B cell (primary cell): ENCODE measurements at regions of chr19 and their contacts with region 1.

Region 1: DNA sequence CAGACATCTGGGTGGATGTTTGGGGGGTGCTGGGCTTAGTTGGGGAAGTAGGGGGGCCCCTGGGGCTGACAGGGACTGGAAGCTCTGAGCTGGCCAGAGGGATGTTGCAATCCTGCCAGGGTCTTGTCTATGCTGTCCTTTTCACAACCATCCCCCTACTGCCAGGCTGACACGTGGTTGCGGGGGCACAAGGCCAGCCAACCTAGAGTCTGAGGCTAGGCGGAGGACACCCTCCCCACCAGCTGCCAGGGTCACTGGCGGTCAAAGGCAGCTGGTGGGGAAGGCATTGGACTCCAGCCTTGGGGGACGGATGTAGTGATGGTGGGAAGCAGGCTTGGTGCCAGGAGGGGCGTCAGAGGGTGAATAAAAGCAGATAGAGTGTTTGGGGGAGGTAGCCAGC is 1.6 kb upstream of the APOC1 start:
- DNase-seq: no peak
- ATAC-seq: no peak
- H3K4me3 ChIP-seq: no peak overlapping the region
- H3K4me3 Mint-ChIP-seq: no peak overlapping the region
- H3K27ac ChIP-seq: no peak overlapping the region
- H3K27ac Mint-ChIP-seq: no peak overlapping the region
- H3K4me1 ChIP-seq: peaks cover 7 to 13% of the 10 kb centered on the region in 2 donors
- H3K4me1 Mint-ChIP-seq: peaks cover 9% of the 10 kb centered on the region
- H3K27me3 ChIP-seq: peaks cover 0 to 21% (median 2%) of the 10 kb centered on the region in 4 experiments
- H3K27me3 Mint-ChIP-seq: peaks cover 26% of the 10 kb centered on the region
- CTCF ChIP-seq: no peak

Region 2: GRCh38 chr19:44845612-44846454 is 67.0 kb before region 1 on chr19 and contains the start of gene NECTIN2:
- CTCF ChIA-PET with region 1: no interaction called
- POLR2A ChIA-PET with region 1: no interaction called
- intact Hi-C with region 1: no loop called
- DNase-seq: peak; percentile 79
- ATAC-seq: peak; percentile 64
- H3K4me3 ChIP-seq: peak within 1 kb of the TSS; percentile 19 to 64 (median 47)
- H3K4me3 Mint-ChIP-seq: peak within 1 kb of the TSS; percentile 83
- H3K27ac ChIP-seq: no peak within 1 kb of the TSS
- H3K27ac Mint-ChIP-seq: peak within 1 kb of the TSS; percentile 20
- H3K4me1 ChIP-seq: peaks cover 35% of the 10 kb centered on the region in 2 donors
- H3K4me1 Mint-ChIP-seq: peaks cover 22% of the 10 kb centered on the region
- H3K27me3 ChIP-seq: peaks cover 0 to 44% (median 19%) of the 10 kb centered on the region in 4 experiments
- H3K27me3 Mint-ChIP-seq: peaks cover 38% of the 10 kb centered on the region
- CTCF ChIP-seq: no peak
- total RNA-seq, gene NECTIN2: 0.32 TPM in 1 of 2 replicates, not detected in the other

Region 3: DNA sequence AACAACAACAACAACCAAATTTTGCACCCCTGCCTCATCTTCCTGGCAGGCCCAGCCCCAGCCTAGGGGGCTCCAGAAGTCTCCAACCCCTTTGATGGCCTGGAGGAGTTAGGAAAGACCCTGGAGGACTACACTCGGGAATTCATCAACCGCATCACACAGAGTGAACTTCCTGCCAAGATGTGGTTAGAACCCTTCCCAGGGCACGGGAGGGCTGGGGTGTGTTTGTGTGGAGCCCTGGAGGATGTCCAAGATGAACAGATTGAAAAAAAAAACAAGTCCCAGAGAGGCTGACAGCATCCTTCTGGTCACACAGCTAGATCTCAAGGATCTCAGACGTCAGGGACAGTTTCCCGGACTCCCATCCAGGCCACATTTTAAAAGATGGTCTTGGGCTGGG is 14.9 kb after region 1 on chr19:
- CTCF ChIA-PET with region 1: no interaction called
- POLR2A ChIA-PET with region 1: no interaction called
- intact Hi-C with region 1: loop called (anchors 1 kb)
- DNase-seq: no peak
- ATAC-seq: no peak
- H3K4me3 ChIP-seq: no peak overlapping the region
- H3K4me3 Mint-ChIP-seq: no peak overlapping the region
- H3K27ac ChIP-seq: no peak overlapping the region
- H3K27ac Mint-ChIP-seq: no peak overlapping the region
- H3K4me1 ChIP-seq: peaks cover 4 to 8% of the 10 kb centered on the region in 2 donors
- H3K4me1 Mint-ChIP-seq: peaks cover 6% of the 10 kb centered on the region
- H3K27me3 ChIP-seq: peaks cover 0 to 10% (median 5%) of the 10 kb centered on the region in 4 experiments
- H3K27me3 Mint-ChIP-seq: peaks cover 18% of the 10 kb centered on the region
- CTCF ChIP-seq: no peak

Region 4: DNA sequence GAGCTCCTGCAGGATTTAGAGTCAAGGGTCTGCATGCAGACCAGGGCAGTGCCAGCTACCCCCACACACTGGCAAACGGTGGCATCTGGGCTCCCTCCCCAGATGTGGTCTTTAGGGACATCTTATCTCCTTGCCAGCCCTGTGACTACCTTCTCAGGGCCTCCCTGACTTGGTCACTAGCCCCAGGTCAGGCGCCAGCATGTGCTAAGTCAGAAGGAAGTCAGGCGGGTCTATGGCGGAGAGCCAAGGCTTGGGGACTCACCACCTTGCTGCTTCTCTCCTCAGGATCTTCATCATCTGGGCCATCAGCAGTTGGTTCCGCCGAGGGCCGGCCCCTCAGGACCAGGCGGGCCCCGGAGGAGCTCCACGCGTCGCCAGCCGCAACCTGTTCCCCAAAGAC is 59.9 kb after region 1 on chr19:
- CTCF ChIA-PET with region 1: no interaction called
- POLR2A ChIA-PET with region 1: no interaction called
- intact Hi-C with region 1: no loop called
- DNase-seq: no peak
- ATAC-seq: no peak
- H3K4me3 ChIP-seq: no peak overlapping the region
- H3K4me3 Mint-ChIP-seq: no peak overlapping the region
- H3K27ac ChIP-seq: no peak overlapping the region
- H3K27ac Mint-ChIP-seq: no peak overlapping the region
- H3K4me1 ChIP-seq: peaks cover 4 to 12% of the 10 kb centered on the region in 2 donors
- H3K4me1 Mint-ChIP-seq: peaks cover 6% of the 10 kb centered on the region
- H3K27me3 ChIP-seq: no peaks in the 10 kb centered on the region
- H3K27me3 Mint-ChIP-seq: no peaks in the 10 kb centered on the region
- CTCF ChIP-seq: no peak